Right ventricle myocardium inferior (tissue), 1 donor: ENCODE measurements at regions of chr19 and their contacts with region 1.

Region 1: GRCh38 chr19:36060430-36060829 is 5.7 kb downstream of the WDR62 start:
- DNase-seq: no peak
- ATAC-seq: peak; percentile 81

Region 2: GRCh38 chr19:36103626-36104552 is 43.5 kb after region 1 on chr19:
- intact Hi-C with region 1: loop called (anchors 5 kb)
- DNase-seq: no peak
- ATAC-seq: no peak

Region 3: GRCh38 chr19:36132489-36132891 is 72.1 kb after region 1 on chr19:
- intact Hi-C with region 1: no loop called
- DNase-seq: no peak
- ATAC-seq: no peak

Region 4: GRCh38 chr19:36152352-36153091 is 92.1 kb after region 1 on chr19 and contains the start of gene COX7A1:
- intact Hi-C with region 1: no loop called
- DNase-seq: peak; percentile 87
- ATAC-seq: peak; percentile 91
- total RNA-seq, gene COX7A1: 3,337 TPM